Endothelial cell of umbilical vein (primary cell): ENCODE measurements at regions of chr2 and their contacts with region 1.

Region 1: GRCh38 chr2:68751397-68752339 is 17.1 kb downstream of the ARHGAP25 start:
- DNase-seq: peak; percentile 91
- H3K4me3 ChIP-seq: no peak overlapping the region
- H3K27ac ChIP-seq: no peak overlapping the region
- H3K4me1 ChIP-seq: peaks cover 7% of the 10 kb centered on the region
- H3K27me3 ChIP-seq: peaks cover 0 to 4% of the 10 kb centered on the region in 2 experiments
- CTCF ChIP-seq: peak; percentile 88 to 92
- POLR2A ChIP-seq: no peak

Region 2: GRCh38 chr2:68612765-68613519 is 138.7 kb before region 1 on chr2:
- CTCF ChIA-PET with region 1: no interaction called
- POLR2A ChIA-PET with region 1: no interaction called
- dilution Hi-C with region 1: no loop called
- intact Hi-C with region 1: no loop called
- DNase-seq: no peak
- H3K4me3 ChIP-seq: no peak overlapping the region
- H3K27ac ChIP-seq: no peak overlapping the region
- H3K4me1 ChIP-seq: no peaks in the 10 kb centered on the region
- H3K27me3 ChIP-seq: peaks cover 0 to 6% of the 10 kb centered on the region in 2 experiments
- CTCF ChIP-seq: no peak
- POLR2A ChIP-seq: no peak

Region 3: GRCh38 chr2:68721482-68722101 is 30.1 kb before region 1 on chr2:
- CTCF ChIA-PET with region 1: interaction called, 13 read pairs
- POLR2A ChIA-PET with region 1: no interaction called
- dilution Hi-C with region 1: no loop called
- intact Hi-C with region 1: no loop called
- DNase-seq: no peak
- H3K4me3 ChIP-seq: no peak overlapping the region
- H3K27ac ChIP-seq: no peak overlapping the region
- H3K4me1 ChIP-seq: no peaks in the 10 kb centered on the region
- H3K27me3 ChIP-seq: peaks cover 8 to 17% of the 10 kb centered on the region in 2 experiments
- CTCF ChIP-seq: no peak
- POLR2A ChIP-seq: no peak

Region 4: GRCh38 chr2:68811364-68811763 is 59.7 kb after region 1 on chr2:
- CTCF ChIA-PET with region 1: interaction called, 15 read pairs
- POLR2A ChIA-PET with region 1: no interaction called
- dilution Hi-C with region 1: no loop called
- intact Hi-C with region 1: no loop called
- DNase-seq: peak; percentile 91
- H3K4me3 ChIP-seq: peak overlapping the region in 1 of 3 experiments; percentile 25
- H3K27ac ChIP-seq: peak overlapping the region; percentile 62
- H3K4me1 ChIP-seq: peaks cover 23% of the 10 kb centered on the region
- H3K27me3 ChIP-seq: no peaks in the 10 kb centered on the region
- CTCF ChIP-seq: no peak
- POLR2A ChIP-seq: no peak

Region 5: GRCh38 chr2:68849579-68850030 is 97.9 kb after region 1 on chr2:
- CTCF ChIA-PET with region 1: interaction called, 18 read pairs
- POLR2A ChIA-PET with region 1: no interaction called
- dilution Hi-C with region 1: no loop called
- intact Hi-C with region 1: no loop called
- DNase-seq: peak; percentile 84
- H3K4me3 ChIP-seq: no peak overlapping the region
- H3K27ac ChIP-seq: peak overlapping the region; percentile 88
- H3K4me1 ChIP-seq: peaks cover 24% of the 10 kb centered on the region
- H3K27me3 ChIP-seq: no peaks in the 10 kb centered on the region
- CTCF ChIP-seq: no peak
- POLR2A ChIP-seq: peak; percentile 45

Region 6: GRCh38 chr2:68909793-68910674 is 158.4 kb after region 1 on chr2:
- CTCF ChIA-PET with region 1: interaction called, 146 read pairs
- POLR2A ChIA-PET with region 1: no interaction called
- dilution Hi-C with region 1: no loop called
- intact Hi-C with region 1: loop called (anchors 1 kb)
- DNase-seq: peak; percentile 82
- H3K4me3 ChIP-seq: no peak overlapping the region
- H3K27ac ChIP-seq: no peak overlapping the region
- H3K4me1 ChIP-seq: peaks cover 32% of the 10 kb centered on the region
- H3K27me3 ChIP-seq: peaks cover 4 to 12% of the 10 kb centered on the region in 2 experiments
- CTCF ChIP-seq: peak; percentile 77 to 86
- POLR2A ChIP-seq: no peak